ENCODE measurements at regions of chr12 and their contacts with region 1.

Region 1: DNA sequence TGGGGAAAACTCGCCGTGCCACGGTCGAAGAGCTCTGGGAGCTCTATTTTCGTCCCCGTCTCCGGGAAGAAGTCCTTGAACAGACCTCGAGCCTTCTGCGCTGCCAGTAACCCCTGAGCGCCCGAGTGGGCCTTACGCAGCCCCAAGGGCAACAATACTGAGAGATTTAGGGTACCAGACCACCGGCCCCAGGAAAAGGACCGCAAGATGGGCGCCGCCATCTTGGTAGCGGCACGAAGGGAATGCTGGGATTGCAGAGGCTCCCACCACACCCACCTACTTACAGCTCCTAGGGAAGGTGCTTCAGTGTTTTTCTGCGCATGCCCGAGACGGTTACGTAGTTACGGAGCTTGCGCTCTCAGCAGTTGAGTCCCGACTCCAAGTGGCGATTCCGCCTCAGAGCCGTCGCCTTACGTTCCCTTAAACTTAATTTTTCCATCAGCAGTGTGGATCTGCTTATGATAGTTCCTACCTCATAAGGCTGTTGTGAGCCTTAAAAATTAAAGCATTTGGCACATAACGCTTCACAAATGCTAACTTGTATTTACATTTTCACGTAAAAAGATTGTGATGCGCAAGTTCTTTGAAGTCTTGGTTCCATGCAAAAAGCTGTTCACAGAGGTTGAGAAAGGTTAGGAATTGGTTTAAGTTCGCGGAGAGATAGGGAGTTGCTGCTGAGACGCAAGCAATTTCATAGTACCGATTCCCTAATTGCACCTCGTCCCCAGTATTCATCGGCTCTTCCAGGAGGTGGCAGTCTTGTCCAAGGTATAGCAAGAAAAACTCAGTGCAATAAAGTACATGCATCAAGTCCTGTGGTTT is at the start of gene YARS2:
- DNase-seq: peak; percentile 90 to 96 (median 96)
- H3K4me3 ChIP-seq: peak within 1 kb of the TSS; percentile 67 to 100 (median 91)
- H3K27ac ChIP-seq: peak within 1 kb of the TSS; percentile 84 to 100 (median 97)
- H3K27me3 ChIP-seq: no peaks in the 10 kb centered on the region
- CTCF ChIP-seq: peak; percentile 58 to 93 (median 82)
- total RNA-seq, gene YARS2: 8.7 to 27.0 (median 15.9) TPM

Region 2: GRCh38 chr12:31659087-31659933 is 1096.6 kb before region 1 on chr12 and contains the start of gene ETFBKMT:
- intact Hi-C with region 1: loop called in 1 of 2 experiments (anchors 10 kb)
- DNase-seq: peak; percentile 68 to 94 (median 90)
- H3K4me3 ChIP-seq: peak within 1 kb of the TSS; percentile 59 to 97 (median 81)
- H3K27ac ChIP-seq: peak within 1 kb of the TSS; percentile 84 to 99 (median 96)
- H3K27me3 ChIP-seq: no peaks in the 10 kb centered on the region
- CTCF ChIP-seq: peak; percentile 29 to 89 (median 72)
- total RNA-seq, gene ETFBKMT: 1.6 to 8.4 (median 4.6) TPM

Region 3: GRCh38 chr12:32688786-32689185 is 67.1 kb before region 1 on chr12:
- intact Hi-C with region 1: loop called in 1 of 2 experiments (anchors 5 kb)
- DNase-seq: no peak
- H3K4me3 ChIP-seq: no peak overlapping the region
- H3K27ac ChIP-seq: no peak overlapping the region
- H3K27me3 ChIP-seq: no peaks in the 10 kb centered on the region
- CTCF ChIP-seq: no peak

Region 4: DNA sequence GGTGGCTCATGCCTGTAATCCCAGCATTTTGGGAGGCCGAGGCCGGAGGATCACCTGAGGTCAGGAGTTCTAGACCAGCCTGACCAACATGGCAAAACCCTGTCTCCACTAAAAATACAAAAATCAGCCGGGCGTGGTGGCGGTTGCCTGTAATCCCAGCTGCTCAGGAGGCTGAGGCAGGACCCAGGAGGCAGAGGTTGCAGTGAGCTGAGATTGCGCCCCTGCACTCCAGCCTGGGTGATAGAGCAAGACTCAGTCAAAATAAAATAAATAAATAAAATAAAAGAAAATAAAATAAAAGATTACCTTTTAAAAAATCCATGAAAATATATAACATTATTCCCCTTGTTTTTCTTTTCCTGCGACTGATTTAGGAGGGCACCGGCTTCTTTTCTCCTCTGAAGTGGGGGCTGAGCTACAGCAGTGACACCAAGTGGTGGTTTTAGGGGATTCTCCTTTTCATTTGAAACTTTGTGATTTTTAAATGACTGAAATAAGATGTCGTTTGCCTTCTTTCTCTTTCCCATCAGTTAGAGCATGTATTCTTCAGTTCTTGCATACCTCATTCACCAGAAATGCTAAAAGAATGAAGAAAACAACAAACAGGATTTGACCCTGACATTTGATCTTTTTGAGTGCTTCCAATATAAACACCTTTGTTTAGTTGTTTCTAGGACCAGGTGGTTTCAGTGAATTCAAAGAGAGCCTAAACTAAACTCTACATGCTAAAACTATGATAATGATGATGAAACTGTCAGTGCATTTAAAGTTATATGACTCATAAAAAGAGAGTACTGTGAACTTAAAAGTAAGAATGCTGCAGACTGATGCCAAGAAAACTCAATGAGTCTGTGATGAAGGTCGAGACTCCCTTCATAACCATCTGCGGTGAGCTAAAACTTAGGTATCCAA is 163.3 kb after region 1 on chr12:
- intact Hi-C with region 1: loop called (anchors 2 to 5 kb)
- DNase-seq: peak in 1 of 10 donors; percentile 38
- H3K4me3 ChIP-seq: peak overlapping the region in 1 of 59 donors; percentile 17
- H3K27ac ChIP-seq: peak overlapping the region in 7 of 59 donors; percentile 28 to 67 (median 38)
- H3K27me3 ChIP-seq: peaks cover 0 to 5% (median 0%) of the 10 kb centered on the region in 45 donors
- CTCF ChIP-seq: peak in 54 of 56 donors; percentile 23 to 71 (median 50)

Region 5: DNA sequence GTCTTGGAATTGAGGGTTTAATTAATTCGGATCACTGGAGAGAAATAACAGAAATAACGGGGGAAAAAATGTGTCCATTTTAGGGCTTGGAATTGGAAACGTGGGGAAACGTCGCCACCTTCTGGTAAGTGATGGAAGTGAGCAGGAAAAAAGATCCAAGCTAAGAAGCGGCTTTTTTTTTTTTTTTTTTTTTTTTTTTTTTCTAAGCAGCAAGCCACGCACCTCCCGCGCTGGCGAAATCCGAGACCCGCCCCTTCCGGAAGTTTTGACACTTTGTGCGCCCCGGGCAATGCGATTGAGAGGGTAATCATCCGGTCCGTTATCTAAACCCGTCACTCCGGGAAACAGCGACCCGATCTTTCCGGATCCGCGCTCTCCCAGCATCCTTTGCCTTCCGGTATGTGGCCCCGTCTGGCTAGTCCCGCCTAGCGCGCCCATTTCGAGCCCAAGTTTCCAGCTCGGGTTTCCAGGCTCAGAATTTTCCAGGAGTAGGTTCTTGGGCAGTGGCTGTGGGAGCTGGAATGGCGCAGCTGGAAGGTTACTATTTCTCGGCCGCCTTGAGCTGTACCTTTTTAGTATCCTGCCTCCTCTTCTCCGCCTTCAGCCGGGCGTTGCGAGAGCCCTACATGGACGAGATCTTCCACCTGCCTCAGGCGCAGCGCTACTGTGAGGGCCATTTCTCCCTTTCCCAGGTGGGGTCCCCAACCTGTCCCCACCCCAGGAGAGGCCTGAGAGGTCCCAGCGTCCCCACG is 1266.4 kb after region 1 on chr12 and contains the start of gene ALG10:
- intact Hi-C with region 1: loop called (anchors 1 kb)
- DNase-seq: peak; percentile 86 to 97 (median 95)
- H3K4me3 ChIP-seq: peak within 1 kb of the TSS; percentile 62 to 94 (median 79)
- H3K27ac ChIP-seq: peak within 1 kb of the TSS; percentile 43 to 97 (median 86)
- H3K27me3 ChIP-seq: no peaks in the 10 kb centered on the region
- CTCF ChIP-seq: peak; percentile 70 to 95 (median 84)
- total RNA-seq, gene ALG10: 4.6 to 13.9 (median 8.1) TPM